ENCODE measurements at regions of chr12 and their contacts with region 1.

Region 1: DNA sequence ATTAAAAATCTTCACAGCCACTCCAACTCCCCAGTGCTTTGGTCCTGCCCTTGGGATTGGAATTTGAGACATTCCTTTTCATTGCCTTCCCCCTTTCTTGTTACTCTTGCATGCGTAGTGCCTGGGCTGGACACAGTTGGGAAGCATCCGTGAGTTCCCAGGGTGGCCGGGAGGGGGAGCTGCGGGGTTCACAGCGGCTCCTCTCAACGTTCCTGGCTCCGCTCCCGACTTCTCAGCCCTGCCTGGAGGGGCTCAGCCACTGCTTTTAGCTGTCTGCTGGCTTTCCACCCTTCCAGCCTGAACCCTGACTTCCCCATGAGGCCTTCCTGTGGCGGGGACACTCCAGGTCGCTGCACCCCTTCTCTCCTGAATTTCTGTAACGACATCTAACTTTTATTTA is 3.2 kb downstream of the TEX52 start:
- DNase-seq: peak; percentile 81
- CTCF ChIP-seq: peak; percentile 45

Region 2: GRCh38 chr12:2719392-2719791 is 134.2 kb before region 1 on chr12:
- in situ Hi-C with region 1: no loop called
- DNase-seq: no peak
- CTCF ChIP-seq: no peak

Region 3: DNA sequence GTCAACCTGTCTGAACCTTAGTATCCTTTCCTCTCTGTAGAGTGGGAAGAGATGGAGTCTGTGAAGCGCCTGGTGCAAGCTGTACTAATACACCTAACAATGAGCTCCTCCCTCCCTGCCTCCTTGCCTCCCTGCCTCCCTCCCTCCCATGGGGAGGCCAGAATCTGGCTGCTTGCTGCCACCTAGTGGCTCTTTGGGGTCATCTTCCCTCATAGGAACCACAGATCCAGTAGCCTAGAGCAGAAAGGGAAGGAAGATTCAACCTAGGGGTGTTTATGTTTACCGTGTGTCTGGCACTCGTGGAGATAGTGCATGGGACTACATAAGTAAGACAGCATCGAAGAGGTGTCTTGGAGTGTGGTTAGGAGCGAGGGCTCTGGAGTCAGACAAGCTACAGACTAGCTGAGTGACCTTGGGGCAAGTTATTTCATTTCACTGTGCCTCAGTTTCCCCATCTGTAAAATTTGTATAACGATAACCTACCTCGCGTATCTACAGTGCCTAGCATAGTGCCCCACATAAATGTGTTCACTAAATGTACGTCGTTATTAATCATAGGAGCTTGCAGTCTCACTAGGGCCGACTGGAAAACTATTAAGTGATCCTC is 188.0 kb after region 1 on chr12:
- in situ Hi-C with region 1: loop called (anchors 25 kb)
- DNase-seq: peak; percentile 89
- CTCF ChIP-seq: peak; percentile 72